Endothelial cell of umbilical vein (primary cell): ENCODE measurements at regions of chr16 and their contacts with region 1.

Region 1: DNA sequence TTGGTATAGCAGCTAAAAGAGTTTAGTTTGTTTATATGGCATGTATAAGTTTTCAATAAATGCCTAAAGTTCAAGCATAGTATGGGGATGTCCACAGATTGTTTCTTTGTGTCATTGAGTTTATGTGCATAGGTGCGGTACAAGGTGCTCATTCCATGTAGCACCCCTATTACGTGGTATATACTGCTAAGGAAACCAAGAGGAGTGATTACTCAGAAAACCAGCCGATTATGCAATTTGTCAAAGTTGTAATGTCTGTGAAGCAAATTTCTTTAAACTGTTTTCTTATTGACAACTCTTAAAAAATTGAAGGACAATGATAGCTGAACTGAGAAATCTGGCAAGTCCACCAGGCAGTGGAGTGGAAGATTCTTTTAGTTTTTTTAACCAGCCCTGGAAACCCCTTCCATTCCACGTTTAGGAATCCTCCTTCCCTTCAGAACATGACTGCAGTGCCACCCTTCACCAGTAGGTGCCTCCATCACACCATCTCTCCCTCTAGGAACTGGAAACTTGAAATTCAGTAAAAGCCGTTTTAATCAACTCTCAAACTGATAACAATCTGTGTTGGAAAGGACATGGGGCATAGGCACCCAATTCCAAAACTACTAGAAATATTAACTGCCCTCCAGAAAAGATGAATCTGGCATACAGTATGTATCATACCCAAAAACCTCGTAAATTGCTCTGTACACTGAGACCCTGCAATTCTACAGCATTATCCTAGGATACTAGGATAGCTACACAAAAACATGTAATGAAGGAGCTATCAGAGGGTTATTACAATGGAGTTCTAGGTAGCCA is 43.5 kb downstream of the REXO5 start:
- DNase-seq: peak; percentile 81
- H3K4me3 ChIP-seq: no peak overlapping the region
- H3K27ac ChIP-seq: no peak overlapping the region
- H3K4me1 ChIP-seq: peaks cover 42% of the 10 kb centered on the region
- H3K27me3 ChIP-seq: no peaks in the 10 kb centered on the region
- CTCF ChIP-seq: peak; percentile 88 to 96
- POLR2A ChIP-seq: peak; percentile 3

Region 2: GRCh38 chr16:20799599-20799998 is 50.2 kb before region 1 on chr16:
- CTCF ChIA-PET with region 1: interaction called, 12 read pairs
- POLR2A ChIA-PET with region 1: no interaction called
- dilution Hi-C with region 1: no loop called
- intact Hi-C with region 1: no loop called
- DNase-seq: peak; percentile 46
- H3K4me3 ChIP-seq: no peak overlapping the region
- H3K27ac ChIP-seq: no peak overlapping the region
- H3K4me1 ChIP-seq: peaks cover 8% of the 10 kb centered on the region
- H3K27me3 ChIP-seq: no peaks in the 10 kb centered on the region
- CTCF ChIP-seq: peak; percentile 20 to 33
- POLR2A ChIP-seq: no peak

Region 3: DNA sequence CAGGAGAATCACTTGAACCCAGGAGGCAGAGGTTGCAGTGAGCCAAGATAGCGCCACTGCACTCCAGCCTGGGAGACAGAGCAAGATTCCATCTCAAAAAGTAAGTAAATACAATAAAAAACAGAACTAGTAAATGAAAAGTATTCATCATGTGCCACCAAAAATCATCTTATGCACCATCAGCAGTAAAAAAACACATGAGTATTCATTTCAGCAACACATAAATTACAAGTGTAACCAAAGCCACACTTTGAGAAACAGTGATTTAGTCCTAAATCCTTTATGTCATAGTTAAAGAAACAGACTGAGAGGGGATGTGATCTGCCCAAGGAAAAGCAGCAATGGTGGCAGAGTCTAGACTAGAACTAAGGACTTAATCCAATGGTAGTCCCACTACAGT is 37.4 kb after region 1 on chr16:
- CTCF ChIA-PET with region 1: interaction called, 10 read pairs
- POLR2A ChIA-PET with region 1: interaction called, 5 read pairs
- dilution Hi-C with region 1: no loop called
- intact Hi-C with region 1: no loop called
- DNase-seq: no peak
- H3K4me3 ChIP-seq: no peak overlapping the region
- H3K27ac ChIP-seq: no peak overlapping the region
- H3K4me1 ChIP-seq: no peaks in the 10 kb centered on the region
- H3K27me3 ChIP-seq: no peaks in the 10 kb centered on the region
- CTCF ChIP-seq: no peak
- POLR2A ChIP-seq: no peak

Region 4: DNA sequence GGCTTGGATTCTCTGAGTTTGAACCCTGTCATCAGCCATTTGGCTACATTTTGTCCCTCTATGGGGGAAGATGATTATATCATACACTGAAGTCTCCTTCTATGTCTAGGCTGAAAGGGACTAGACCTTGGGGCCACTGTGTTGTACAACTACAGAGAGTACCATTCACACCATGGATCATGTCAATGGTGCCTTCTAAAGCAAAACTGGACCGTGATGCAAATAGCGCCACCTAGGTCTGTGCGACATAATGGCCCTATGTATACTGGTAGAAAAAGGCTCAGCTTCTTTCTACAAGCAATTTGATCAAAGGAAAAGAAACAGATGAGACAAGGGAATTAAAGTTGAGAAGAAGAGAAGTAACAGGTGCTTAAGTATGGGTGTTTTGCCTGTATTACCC is 151.5 kb after region 1 on chr16:
- CTCF ChIA-PET with region 1: interaction called, 33 read pairs
- POLR2A ChIA-PET with region 1: no interaction called
- dilution Hi-C with region 1: no loop called
- intact Hi-C with region 1: loop called (anchors 1 kb)
- DNase-seq: peak; percentile 27
- H3K4me3 ChIP-seq: no peak overlapping the region
- H3K27ac ChIP-seq: no peak overlapping the region
- H3K4me1 ChIP-seq: no peaks in the 10 kb centered on the region
- H3K27me3 ChIP-seq: peaks cover 4% of the 10 kb centered on the region in 2 experiments
- CTCF ChIP-seq: peak; percentile 35 to 53
- POLR2A ChIP-seq: no peak

Region 5: DNA sequence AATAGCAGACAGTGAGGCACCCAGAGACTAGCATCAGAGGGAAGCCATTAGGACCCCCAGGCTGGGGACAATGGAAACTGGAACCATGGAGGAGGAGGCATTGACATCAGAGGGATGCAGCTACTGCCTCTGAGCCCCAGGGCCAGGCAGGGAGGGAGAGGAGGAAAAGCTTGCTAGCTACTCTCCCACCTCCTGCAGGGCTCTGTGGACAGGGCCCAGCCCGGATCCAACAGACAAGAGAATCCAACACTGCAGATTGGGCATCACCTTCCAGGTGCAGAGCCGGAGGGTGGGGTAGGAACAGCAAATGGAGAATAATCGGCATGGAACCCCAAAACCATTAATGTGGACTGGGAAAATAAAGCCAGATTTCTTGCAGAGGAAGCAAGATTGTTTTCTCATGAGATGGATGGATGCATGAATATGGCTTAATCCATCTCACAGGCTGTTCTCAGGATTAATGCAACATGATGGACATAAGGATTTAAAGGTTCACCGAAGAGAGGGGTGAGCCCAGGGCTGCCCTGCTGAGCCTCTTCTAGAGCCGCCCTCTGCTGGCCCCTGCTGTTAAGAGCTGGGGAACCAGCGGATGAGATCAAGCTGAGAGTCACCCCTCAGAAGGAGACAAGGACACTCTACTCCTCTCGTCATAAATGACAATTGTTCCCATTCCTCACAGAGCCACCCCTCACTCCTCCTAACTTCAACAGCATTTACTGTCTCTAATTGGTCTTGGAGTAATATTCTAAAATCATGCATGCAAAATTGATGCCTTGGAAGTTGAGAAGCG is 252.0 kb after region 1 on chr16:
- CTCF ChIA-PET with region 1: interaction called, 8 read pairs
- POLR2A ChIA-PET with region 1: no interaction called
- dilution Hi-C with region 1: no loop called
- intact Hi-C with region 1: loop called (anchors 5 kb)
- DNase-seq: no peak
- H3K4me3 ChIP-seq: no peak overlapping the region
- H3K27ac ChIP-seq: no peak overlapping the region
- H3K4me1 ChIP-seq: peaks cover 15% of the 10 kb centered on the region
- H3K27me3 ChIP-seq: peaks cover 4% of the 10 kb centered on the region in 2 experiments
- CTCF ChIP-seq: peak in 1 of 2 donors; percentile 19
- POLR2A ChIP-seq: no peak

Region 6: GRCh38 chr16:21277927-21278706 is 428.3 kb after region 1 on chr16 and contains the start of gene CRYM:
- CTCF ChIA-PET with region 1: no interaction called
- POLR2A ChIA-PET with region 1: no interaction called
- dilution Hi-C with region 1: no loop called
- intact Hi-C with region 1: loop called (anchors 5 kb)
- DNase-seq: peak; percentile 36
- H3K4me3 ChIP-seq: peak within 1 kb of the TSS in 1 of 3 experiments; percentile 19
- H3K27ac ChIP-seq: no peak within 1 kb of the TSS
- H3K4me1 ChIP-seq: peaks cover 2% of the 10 kb centered on the region
- H3K27me3 ChIP-seq: peaks cover 25 to 36% of the 10 kb centered on the region in 2 experiments
- CTCF ChIP-seq: peak; percentile 57 to 86
- POLR2A ChIP-seq: no peak
- total RNA-seq, gene CRYM: not detected in 2 replicates